Mucosa of descending colon (tissue), 3 donors: ENCODE measurements at regions of chr5 and their contacts with region 1.

Region 1: DNA sequence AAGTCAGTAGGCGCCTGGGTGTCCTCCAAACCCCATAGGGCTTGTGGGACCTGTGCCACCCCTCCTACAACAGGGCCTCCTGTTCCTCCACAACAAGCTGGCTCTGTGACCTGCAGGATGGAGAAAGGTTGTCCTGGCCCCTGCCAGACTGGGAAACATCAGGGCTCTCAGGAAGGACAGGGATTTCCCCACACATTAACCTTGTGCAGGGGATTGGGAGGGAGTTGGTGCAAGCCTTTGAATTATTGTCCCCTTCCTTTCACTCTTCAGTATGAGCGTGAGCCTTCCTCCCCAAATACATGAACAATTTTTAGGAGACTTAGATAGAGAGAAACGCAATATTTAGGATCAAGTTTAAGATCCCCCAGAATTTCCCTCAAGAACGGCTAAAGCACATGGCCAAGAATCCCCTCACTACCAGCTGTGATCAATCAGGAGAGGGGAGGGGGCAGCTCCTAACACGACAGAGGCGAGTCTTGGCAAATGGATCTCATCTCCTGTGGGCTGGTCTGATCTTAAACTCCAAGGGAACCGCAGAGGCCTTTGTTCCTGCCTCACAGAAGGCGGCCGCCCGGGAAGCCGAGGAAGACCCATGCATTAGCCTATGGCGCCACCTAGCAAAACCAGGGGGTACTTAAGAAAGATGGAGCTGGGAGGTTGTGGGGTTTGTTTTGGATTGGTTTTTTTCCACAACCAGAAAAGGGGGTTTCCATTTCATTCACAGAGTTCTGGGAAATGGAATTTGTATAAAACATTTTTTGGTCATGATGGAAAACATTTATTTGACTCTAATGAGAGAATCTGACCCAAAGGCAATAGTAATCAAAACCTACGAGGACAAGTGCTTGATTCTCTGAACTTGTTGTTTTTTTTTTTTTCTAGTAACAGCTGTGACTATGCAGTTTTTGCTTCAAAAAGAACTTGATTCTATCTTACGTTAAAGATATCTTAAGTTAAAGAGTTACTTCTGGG is 36.1 kb upstream of the OSMR start:
- DNase-seq: peak; percentile 61 to 78 (median 65)
- ATAC-seq: peak; percentile 81
- H3K4me3 ChIP-seq: no peak overlapping the region
- H3K4me1 ChIP-seq: no peaks in the 10 kb centered on the region
- CTCF ChIP-seq: peak; percentile 38

Region 2: DNA sequence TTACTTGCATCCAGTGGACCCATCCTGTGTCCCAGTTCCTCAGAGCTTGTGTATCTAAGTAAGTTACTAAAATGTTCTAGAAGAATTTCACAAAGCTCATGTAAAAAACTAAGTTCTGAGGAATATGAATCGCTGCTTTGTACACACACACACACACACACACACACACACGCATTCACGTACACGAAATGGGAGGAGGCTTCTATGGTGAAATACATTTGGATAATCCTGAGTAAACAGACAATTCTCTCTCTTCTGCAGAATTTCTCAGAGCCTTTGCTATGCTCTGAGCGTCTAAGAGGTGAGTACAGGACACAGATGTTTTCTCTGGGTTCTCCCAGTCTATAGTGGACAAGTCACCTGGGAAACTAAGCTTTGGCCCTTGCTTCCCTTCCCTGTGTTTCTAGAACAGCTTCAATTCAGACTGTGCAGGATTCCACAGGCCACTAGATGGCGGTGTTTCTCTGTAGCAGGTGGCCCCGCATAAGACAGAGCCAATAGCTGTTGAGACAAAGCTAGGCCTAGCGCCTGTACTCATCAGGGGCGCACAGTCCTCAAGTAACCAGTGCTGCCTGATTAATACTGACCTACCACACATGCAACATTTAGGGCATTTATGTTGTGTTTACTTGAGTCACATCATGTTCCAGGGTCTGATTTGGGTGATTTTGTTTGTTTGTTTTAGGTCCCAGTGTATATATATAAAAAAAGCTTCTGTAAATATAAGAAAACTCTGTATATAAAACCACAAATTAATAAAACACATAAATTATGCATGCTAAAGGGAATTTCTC is 368.0 kb before region 1 on chr5:
- intact Hi-C with region 1: loop called (anchors 2 to 10 kb)
- DNase-seq: peak; percentile 59 to 93 (median 78)
- ATAC-seq: peak; percentile 97
- H3K4me3 ChIP-seq: no peak overlapping the region
- H3K4me1 ChIP-seq: no peaks in the 10 kb centered on the region
- CTCF ChIP-seq: peak; percentile 77

Region 3: DNA sequence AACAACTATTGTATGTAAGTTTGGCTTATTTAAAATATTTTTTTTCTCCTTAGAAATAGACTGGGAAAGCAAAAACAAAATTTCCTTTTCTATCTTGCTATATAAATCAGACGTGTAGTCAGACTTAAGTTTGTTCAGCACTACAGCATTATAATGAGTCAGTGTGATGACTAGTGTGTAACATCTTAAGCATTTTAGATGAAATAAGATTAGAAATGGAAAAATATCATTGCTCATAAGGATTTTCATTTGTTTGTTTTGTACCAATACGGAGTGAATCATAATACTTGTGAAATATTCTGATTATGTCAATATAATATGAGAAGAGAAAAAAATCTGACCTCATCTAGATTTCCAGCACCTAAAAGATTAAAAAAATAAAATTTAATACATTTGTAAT is 329.2 kb after region 1 on chr5:
- intact Hi-C with region 1: no loop called
- DNase-seq: no peak
- ATAC-seq: no peak
- H3K4me3 ChIP-seq: no peak overlapping the region
- H3K4me1 ChIP-seq: no peaks in the 10 kb centered on the region
- CTCF ChIP-seq: no peak